ENCODE measurements at regions of chr9 and their contacts with region 1.

Region 1: GRCh38 chr9:124940693-124941453 is at the start of gene GOLGA1:
- DNase-seq: peak; percentile 92
- H3K4me3 Mint-ChIP-seq: peak within 1 kb of the TSS; percentile 95
- H3K27ac Mint-ChIP-seq: peak within 1 kb of the TSS; percentile 98
- H3K4me1 Mint-ChIP-seq: peaks cover 25% of the 10 kb centered on the region
- H3K27me3 Mint-ChIP-seq: no peaks in the 10 kb centered on the region
- total RNA-seq, gene GOLGA1: 15.5 and 16.1 TPM in 2 replicates

Region 2: GRCh38 chr9:124415102-124415851 is 525.6 kb before region 1 on chr9 and contains the start of gene PSMB7:
- intact Hi-C with region 1: loop called (anchors 5 kb)
- DNase-seq: peak; percentile 95
- H3K4me3 Mint-ChIP-seq: peak within 1 kb of the TSS; percentile 98
- H3K27ac Mint-ChIP-seq: peak within 1 kb of the TSS; percentile 96
- H3K4me1 Mint-ChIP-seq: peaks cover 34% of the 10 kb centered on the region
- H3K27me3 Mint-ChIP-seq: no peaks in the 10 kb centered on the region
- total RNA-seq, gene PSMB7: 205 and 211 TPM in 2 replicates

Region 3: GRCh38 chr9:124861342-124862229 is 79.3 kb before region 1 on chr9 and contains the starts of genes ARPC5L and RPL35:
- intact Hi-C with region 1: loop called (anchors 1 kb)
- DNase-seq: peak; percentile 94
- H3K4me3 Mint-ChIP-seq: peak within 1 kb of the TSS; percentile 94
- H3K27ac Mint-ChIP-seq: peak within 1 kb of the TSS; percentile 98
- H3K4me1 Mint-ChIP-seq: peaks cover 19% of the 10 kb centered on the region
- H3K27me3 Mint-ChIP-seq: no peaks in the 10 kb centered on the region
- total RNA-seq, gene ARPC5L: 76.4 and 76.7 TPM in 2 replicates
- total RNA-seq, gene RPL35: 1,671 and 1,735 TPM in 2 replicates

Region 4: GRCh38 chr9:124869986-124870560 is 70.8 kb before region 1 on chr9:
- intact Hi-C with region 1: loop called (anchors 1 kb)
- DNase-seq: peak; percentile 71
- H3K4me3 Mint-ChIP-seq: peak overlapping the region; percentile 99
- H3K27ac Mint-ChIP-seq: peak overlapping the region; percentile 98
- H3K4me1 Mint-ChIP-seq: peaks cover 39% of the 10 kb centered on the region
- H3K27me3 Mint-ChIP-seq: no peaks in the 10 kb centered on the region

Region 5: GRCh38 chr9:125008599-125008998 is 67.7 kb after region 1 on chr9:
- intact Hi-C with region 1: no loop called
- DNase-seq: no peak
- H3K4me3 Mint-ChIP-seq: no peak overlapping the region
- H3K27ac Mint-ChIP-seq: no peak overlapping the region
- H3K4me1 Mint-ChIP-seq: no peaks in the 10 kb centered on the region
- H3K27me3 Mint-ChIP-seq: no peaks in the 10 kb centered on the region

Region 6: DNA sequence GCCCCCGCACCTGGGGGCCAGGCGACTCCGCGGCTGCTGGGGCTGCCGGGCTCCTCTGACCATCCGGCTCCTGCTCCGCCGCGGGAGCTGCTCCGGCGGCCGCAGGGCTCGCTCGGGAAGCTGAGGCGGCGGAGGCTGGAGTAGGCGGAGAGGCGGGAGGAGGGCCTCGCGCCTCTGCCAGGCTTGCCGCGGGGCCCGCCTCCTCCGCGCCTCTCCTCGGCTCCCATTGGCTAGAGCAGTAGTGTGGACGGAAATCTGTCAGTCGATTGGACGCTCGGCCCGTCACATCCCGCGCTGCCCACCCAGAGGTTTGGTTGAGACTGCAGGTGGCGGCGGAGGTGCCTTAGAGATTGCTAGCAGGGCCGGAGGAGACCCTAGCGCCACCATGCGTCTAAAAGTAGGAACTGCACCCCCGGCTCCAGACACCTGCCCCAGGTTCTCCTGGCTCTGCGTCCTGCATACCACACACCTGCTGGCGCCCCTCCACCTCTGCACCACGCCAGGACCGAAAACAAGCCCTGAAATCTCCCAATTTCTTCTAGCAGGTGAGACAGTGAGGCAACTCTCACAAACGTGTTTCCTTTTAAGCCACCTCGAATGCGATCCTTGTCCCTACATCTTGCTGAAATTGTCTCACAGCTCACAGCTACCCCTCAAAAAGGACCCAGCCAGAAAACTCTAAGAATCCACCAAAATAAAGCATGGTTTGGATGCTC is 202.7 kb after region 1 on chr9 and contains the start of gene SCAI:
- intact Hi-C with region 1: loop called (anchors 1 kb)
- DNase-seq: peak; percentile 98
- H3K4me3 Mint-ChIP-seq: peak within 1 kb of the TSS; percentile 97
- H3K27ac Mint-ChIP-seq: peak within 1 kb of the TSS; percentile 66
- H3K4me1 Mint-ChIP-seq: peaks cover 26% of the 10 kb centered on the region
- H3K27me3 Mint-ChIP-seq: no peaks in the 10 kb centered on the region
- total RNA-seq, gene SCAI: 14.2 and 15.9 TPM in 2 replicates

Region 7: DNA sequence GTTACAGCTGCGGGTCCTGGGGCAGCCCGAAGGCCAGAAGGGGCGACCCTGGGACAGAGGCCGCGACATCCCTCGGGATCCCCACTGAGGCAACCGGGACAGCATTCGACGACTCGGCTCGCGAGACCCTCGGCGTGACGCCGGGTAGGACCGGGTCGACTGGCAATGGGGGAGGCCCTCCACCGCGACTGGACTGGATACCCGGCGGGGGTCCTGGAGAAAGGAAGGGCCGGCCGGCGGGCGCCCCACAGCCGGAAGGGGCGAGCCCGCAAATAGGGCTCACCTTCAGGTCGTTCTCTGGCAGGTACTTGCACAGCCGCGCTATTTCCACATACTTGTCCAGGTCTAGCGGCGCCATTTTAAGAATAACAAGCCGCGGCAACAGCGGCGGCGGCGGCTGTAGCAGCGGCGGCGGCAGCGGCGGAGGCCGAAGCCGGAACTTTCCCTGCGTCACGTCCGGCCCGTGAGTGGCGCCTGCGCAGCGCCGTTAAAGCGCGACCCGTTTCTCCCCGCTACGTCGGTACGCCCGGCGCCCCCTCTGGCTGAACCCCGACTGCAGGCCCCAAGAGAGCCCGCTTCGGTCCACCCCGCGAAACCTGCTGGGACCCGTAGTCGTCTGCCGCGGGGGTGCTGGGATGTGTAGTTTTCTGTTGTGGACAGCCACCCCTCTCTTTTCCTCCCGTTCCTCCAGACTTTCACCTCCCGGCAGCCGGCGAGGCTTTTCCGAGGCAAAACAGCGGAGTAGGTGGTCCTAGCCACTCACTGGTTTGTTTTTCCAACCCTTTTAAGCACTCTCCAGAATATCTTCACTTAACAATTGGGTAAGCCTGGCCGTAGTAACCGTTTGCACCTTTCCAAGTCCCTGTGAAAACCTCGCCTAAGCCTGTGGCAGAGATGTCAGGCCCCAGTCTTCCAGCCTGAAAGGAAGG is 248.8 kb after region 1 on chr9 and contains the start of gene PPP6C:
- intact Hi-C with region 1: loop called (anchors 1 kb)
- DNase-seq: peak; percentile 96
- H3K4me3 Mint-ChIP-seq: peak within 1 kb of the TSS; percentile 94
- H3K27ac Mint-ChIP-seq: peak within 1 kb of the TSS; percentile 91
- H3K4me1 Mint-ChIP-seq: peaks cover 20% of the 10 kb centered on the region
- H3K27me3 Mint-ChIP-seq: no peaks in the 10 kb centered on the region
- total RNA-seq, gene PPP6C: 44.3 and 44.9 TPM in 2 replicates

Region 8: GRCh38 chr9:125261501-125262293 is 320.8 kb after region 1 on chr9 and contains the start of gene GAPVD1:
- intact Hi-C with region 1: loop called (anchors 5 kb)
- DNase-seq: peak; percentile 86
- H3K4me3 Mint-ChIP-seq: peak within 1 kb of the TSS; percentile 98
- H3K27ac Mint-ChIP-seq: peak within 1 kb of the TSS; percentile 90
- H3K4me1 Mint-ChIP-seq: peaks cover 32% of the 10 kb centered on the region
- H3K27me3 Mint-ChIP-seq: peaks cover 2% of the 10 kb centered on the region
- total RNA-seq, gene GAPVD1: 50.8 and 51.0 TPM in 2 replicates